B cell (primary cell): ENCODE measurements at regions of chr2 and their contacts with region 1.

Region 1: GRCh38 chr2:100262555-100263320 is 59.6 kb downstream of the LONRF2 start:
- DNase-seq: peak; percentile 73
- ATAC-seq: peak; percentile 77
- H3K4me3 ChIP-seq: no peak overlapping the region
- H3K4me3 Mint-ChIP-seq: no peak overlapping the region
- H3K27ac ChIP-seq: no peak overlapping the region
- H3K27ac Mint-ChIP-seq: no peak overlapping the region
- H3K4me1 ChIP-seq: no peaks in the 10 kb centered on the region
- H3K4me1 Mint-ChIP-seq: peaks cover 17% of the 10 kb centered on the region
- H3K27me3 ChIP-seq: no peaks in the 10 kb centered on the region
- H3K27me3 Mint-ChIP-seq: no peaks in the 10 kb centered on the region
- CTCF ChIP-seq: peak; percentile 99

Region 2: GRCh38 chr2:99559075-99559662 is 703.6 kb before region 1 on chr2:
- CTCF ChIA-PET with region 1: interaction called, 143 read pairs
- POLR2A ChIA-PET with region 1: interaction called, 3 read pairs
- intact Hi-C with region 1: no loop called
- DNase-seq: peak; percentile 84
- ATAC-seq: peak; percentile 95
- H3K4me3 ChIP-seq: no peak overlapping the region
- H3K4me3 Mint-ChIP-seq: no peak overlapping the region
- H3K27ac ChIP-seq: peak overlapping the region in 1 of 2 donors; percentile 25
- H3K27ac Mint-ChIP-seq: peak overlapping the region; percentile 65
- H3K4me1 ChIP-seq: no peaks in the 10 kb centered on the region
- H3K4me1 Mint-ChIP-seq: peaks cover 4% of the 10 kb centered on the region
- H3K27me3 ChIP-seq: no peaks in the 10 kb centered on the region
- H3K27me3 Mint-ChIP-seq: no peaks in the 10 kb centered on the region
- CTCF ChIP-seq: peak; percentile 100

Region 3: DNA sequence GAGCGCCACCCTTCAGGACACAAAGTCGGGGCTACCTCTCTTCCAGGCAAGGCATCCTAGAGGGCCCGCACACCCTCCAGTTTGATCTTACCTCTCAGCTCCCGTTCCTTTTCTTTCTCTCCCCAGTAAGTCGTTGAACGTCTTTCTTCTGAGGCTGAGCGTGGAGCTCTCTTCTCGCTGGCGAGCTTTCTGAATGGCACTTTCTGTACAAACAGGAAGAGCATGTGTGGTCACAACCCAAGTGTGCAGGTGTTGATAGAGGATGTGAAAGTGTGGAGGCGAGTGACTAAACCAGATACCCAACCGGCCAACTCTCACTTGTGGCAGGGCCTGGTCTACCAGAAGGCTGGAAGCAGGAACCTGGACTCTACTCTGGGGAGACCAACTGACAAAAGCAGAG is 120.3 kb before region 1 on chr2 and contains the start of gene AFF3:
- CTCF ChIA-PET with region 1: interaction called, 11 read pairs
- POLR2A ChIA-PET with region 1: no interaction called
- intact Hi-C with region 1: no loop called
- DNase-seq: peak; percentile 93
- ATAC-seq: peak; percentile 81
- H3K4me3 ChIP-seq: peak within 1 kb of the TSS; percentile 66 to 98 (median 91)
- H3K4me3 Mint-ChIP-seq: peak within 1 kb of the TSS; percentile 99
- H3K27ac ChIP-seq: peak within 1 kb of the TSS; percentile 83 to 88
- H3K27ac Mint-ChIP-seq: peak within 1 kb of the TSS; percentile 91
- H3K4me1 ChIP-seq: peaks cover 57 to 58% of the 10 kb centered on the region in 2 donors
- H3K4me1 Mint-ChIP-seq: peaks cover 67% of the 10 kb centered on the region
- H3K27me3 ChIP-seq: no peaks in the 10 kb centered on the region
- H3K27me3 Mint-ChIP-seq: no peaks in the 10 kb centered on the region
- CTCF ChIP-seq: no peak
- total RNA-seq, gene AFF3: 826 and 830 TPM in 2 replicates

Region 4: GRCh38 chr2:100224988-100225710 is 37.6 kb before region 1 on chr2:
- CTCF ChIA-PET with region 1: no interaction called
- POLR2A ChIA-PET with region 1: no interaction called
- intact Hi-C with region 1: no loop called
- DNase-seq: no peak
- ATAC-seq: no peak
- H3K4me3 ChIP-seq: no peak overlapping the region
- H3K4me3 Mint-ChIP-seq: no peak overlapping the region
- H3K27ac ChIP-seq: no peak overlapping the region
- H3K27ac Mint-ChIP-seq: no peak overlapping the region
- H3K4me1 ChIP-seq: no peaks in the 10 kb centered on the region
- H3K4me1 Mint-ChIP-seq: peaks cover 12% of the 10 kb centered on the region
- H3K27me3 ChIP-seq: peaks cover 0 to 6% (median 2%) of the 10 kb centered on the region in 4 experiments
- H3K27me3 Mint-ChIP-seq: peaks cover 14% of the 10 kb centered on the region
- CTCF ChIP-seq: no peak

Region 5: DNA sequence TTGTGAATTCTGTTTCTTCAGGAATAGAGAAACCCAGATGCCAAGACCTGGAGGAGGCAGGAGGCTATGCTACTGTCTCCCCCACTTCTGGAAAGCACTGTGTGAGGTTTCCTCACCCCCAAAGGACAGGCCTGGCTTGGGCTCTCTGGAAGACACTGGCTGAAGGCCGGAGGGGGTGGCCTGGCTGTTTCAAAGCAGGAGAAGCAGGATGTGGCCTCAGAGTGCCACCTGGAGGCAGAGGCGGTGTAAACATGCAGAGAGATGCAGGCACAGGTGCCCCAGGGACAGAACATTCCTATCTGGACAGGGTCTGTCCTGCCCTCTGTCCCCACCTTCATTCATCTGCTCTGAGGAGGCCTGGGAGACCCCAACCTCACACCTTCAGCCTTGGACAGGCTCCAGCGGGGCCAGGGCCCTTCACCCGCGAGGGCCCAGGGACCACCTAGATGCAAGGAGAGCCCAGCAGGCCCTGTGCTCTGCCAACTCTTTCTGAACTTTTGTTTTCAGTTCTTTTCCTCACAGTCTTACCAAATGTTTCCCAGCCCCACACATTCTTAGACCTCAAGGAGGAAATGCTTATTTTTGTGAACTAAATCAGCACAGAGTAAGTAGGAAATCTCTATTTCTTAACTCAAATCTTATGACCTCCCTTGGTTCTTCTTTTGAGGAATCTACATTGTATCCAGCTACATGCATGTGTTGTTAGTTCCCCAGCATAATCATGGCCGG is 19.7 kb before region 1 on chr2:
- CTCF ChIA-PET with region 1: interaction called, 79 read pairs
- POLR2A ChIA-PET with region 1: interaction called, 5 read pairs
- intact Hi-C with region 1: loop called (anchors 2 kb)
- DNase-seq: peak; percentile 80
- ATAC-seq: peak; percentile 29
- H3K4me3 ChIP-seq: no peak overlapping the region
- H3K4me3 Mint-ChIP-seq: peak overlapping the region; percentile 57
- H3K27ac ChIP-seq: no peak overlapping the region
- H3K27ac Mint-ChIP-seq: peak overlapping the region; percentile 11
- H3K4me1 ChIP-seq: peaks cover 70 to 75% of the 10 kb centered on the region in 2 donors
- H3K4me1 Mint-ChIP-seq: peaks cover 71% of the 10 kb centered on the region
- H3K27me3 ChIP-seq: peaks cover 0 to 3% (median 1%) of the 10 kb centered on the region in 4 experiments
- H3K27me3 Mint-ChIP-seq: peaks cover 19% of the 10 kb centered on the region
- CTCF ChIP-seq: peak; percentile 84

Region 6: GRCh38 chr2:100381240-100381639 is 118.5 kb after region 1 on chr2:
- CTCF ChIA-PET with region 1: interaction called, 137 read pairs
- POLR2A ChIA-PET with region 1: no interaction called
- intact Hi-C with region 1: loop called (anchors 1 kb)
- DNase-seq: peak; percentile 91
- ATAC-seq: peak; percentile 91
- H3K4me3 ChIP-seq: no peak overlapping the region
- H3K4me3 Mint-ChIP-seq: no peak overlapping the region
- H3K27ac ChIP-seq: no peak overlapping the region
- H3K27ac Mint-ChIP-seq: no peak overlapping the region
- H3K4me1 ChIP-seq: peaks cover 0 to 6% of the 10 kb centered on the region in 2 donors
- H3K4me1 Mint-ChIP-seq: peaks cover 8% of the 10 kb centered on the region
- H3K27me3 ChIP-seq: peaks cover 0 to 4% (median 0%) of the 10 kb centered on the region in 4 experiments
- H3K27me3 Mint-ChIP-seq: no peaks in the 10 kb centered on the region
- CTCF ChIP-seq: peak; percentile 91

Region 7: GRCh38 chr2:100427628-100428258 is 165.0 kb after region 1 on chr2:
- CTCF ChIA-PET with region 1: interaction called, 9 read pairs
- POLR2A ChIA-PET with region 1: no interaction called
- intact Hi-C with region 1: loop called (anchors 1 kb)
- DNase-seq: peak; percentile 73
- ATAC-seq: peak; percentile 81
- H3K4me3 ChIP-seq: no peak overlapping the region
- H3K4me3 Mint-ChIP-seq: no peak overlapping the region
- H3K27ac ChIP-seq: no peak overlapping the region
- H3K27ac Mint-ChIP-seq: no peak overlapping the region
- H3K4me1 ChIP-seq: no peaks in the 10 kb centered on the region
- H3K4me1 Mint-ChIP-seq: peaks cover 5% of the 10 kb centered on the region
- H3K27me3 ChIP-seq: peaks cover 0 to 3% (median 0%) of the 10 kb centered on the region in 4 experiments
- H3K27me3 Mint-ChIP-seq: peaks cover 12% of the 10 kb centered on the region
- CTCF ChIP-seq: peak; percentile 80

Region 8: GRCh38 chr2:100721693-100722092 is 459.0 kb after region 1 on chr2:
- CTCF ChIA-PET with region 1: no interaction called
- POLR2A ChIA-PET with region 1: no interaction called
- intact Hi-C with region 1: no loop called
- DNase-seq: no peak
- ATAC-seq: no peak
- H3K4me3 ChIP-seq: no peak overlapping the region
- H3K4me3 Mint-ChIP-seq: no peak overlapping the region
- H3K27ac ChIP-seq: no peak overlapping the region
- H3K27ac Mint-ChIP-seq: no peak overlapping the region
- H3K4me1 ChIP-seq: no peaks in the 10 kb centered on the region
- H3K4me1 Mint-ChIP-seq: no peaks in the 10 kb centered on the region
- H3K27me3 ChIP-seq: peaks cover 0 to 13% (median 0%) of the 10 kb centered on the region in 4 experiments
- H3K27me3 Mint-ChIP-seq: peaks cover 26% of the 10 kb centered on the region
- CTCF ChIP-seq: no peak

Region 9: GRCh38 chr2:100984892-100985379 is 722.2 kb after region 1 on chr2:
- CTCF ChIA-PET with region 1: interaction called, 34 read pairs
- POLR2A ChIA-PET with region 1: no interaction called
- intact Hi-C with region 1: no loop called
- DNase-seq: peak; percentile 83
- ATAC-seq: peak; percentile 81
- H3K4me3 ChIP-seq: no peak overlapping the region
- H3K4me3 Mint-ChIP-seq: no peak overlapping the region
- H3K27ac ChIP-seq: no peak overlapping the region
- H3K27ac Mint-ChIP-seq: no peak overlapping the region
- H3K4me1 ChIP-seq: no peaks in the 10 kb centered on the region
- H3K4me1 Mint-ChIP-seq: no peaks in the 10 kb centered on the region
- H3K27me3 ChIP-seq: peaks cover 0 to 4% (median 3%) of the 10 kb centered on the region in 4 experiments
- H3K27me3 Mint-ChIP-seq: peaks cover 13% of the 10 kb centered on the region
- CTCF ChIP-seq: peak; percentile 93